Gastrocnemius medialis (tissue), 4 donors: ENCODE measurements at regions of chr1 and their contacts with region 1.

Region 1: GRCh38 chr1:20493839-20494608 is 8.0 kb upstream of the CAMK2N1 start:
- DNase-seq: peak; percentile 59 to 77
- ATAC-seq: peak; percentile 83 to 87
- H3K4me3 ChIP-seq: no peak overlapping the region
- H3K27ac ChIP-seq: no peak overlapping the region
- H3K4me1 ChIP-seq: peaks cover 3 to 5% of the 10 kb centered on the region in 2 donors
- H3K27me3 ChIP-seq: no peaks in the 10 kb centered on the region
- CTCF ChIP-seq: peak; percentile 93 to 97 (median 95)
- POLR2A ChIP-seq: no peak

Region 2: DNA sequence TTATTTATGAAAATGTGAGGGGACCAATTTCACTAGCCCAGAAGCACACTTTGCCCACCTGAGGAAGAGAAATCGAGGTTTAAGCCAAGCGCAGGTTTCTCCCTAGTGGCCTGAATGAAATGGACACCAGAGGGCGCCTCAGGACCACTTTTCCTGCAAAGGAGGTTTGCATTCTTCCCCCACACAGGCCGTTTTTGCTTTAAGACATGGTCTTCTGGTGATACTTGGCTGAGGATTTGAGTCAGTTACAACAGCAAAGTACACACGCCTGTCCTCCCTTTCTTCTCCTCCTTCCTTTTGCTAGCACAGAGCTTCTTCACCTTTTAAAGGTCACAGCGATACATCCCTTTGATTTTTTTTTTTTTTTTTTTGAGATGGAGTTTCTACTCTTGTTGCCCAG is 576.0 kb before region 1 on chr1:
- in situ Hi-C with region 1: loop called (anchors 10 kb)
- intact Hi-C with region 1: loop called (anchors 1 kb)
- DNase-seq: peak; percentile 38 to 62
- ATAC-seq: peak; percentile 66 to 77
- H3K4me3 ChIP-seq: no peak overlapping the region
- H3K27ac ChIP-seq: no peak overlapping the region
- H3K4me1 ChIP-seq: no peaks in the 10 kb centered on the region
- H3K27me3 ChIP-seq: no peaks in the 10 kb centered on the region
- CTCF ChIP-seq: peak; percentile 70 to 88 (median 81)
- POLR2A ChIP-seq: no peak

Region 3: GRCh38 chr1:20212685-20213331 is 281.2 kb before region 1 on chr1:
- in situ Hi-C with region 1: loop called (anchors 5 kb)
- intact Hi-C with region 1: loop called (anchors 1 kb)
- DNase-seq: peak; percentile 22 to 23
- ATAC-seq: peak; percentile 36 to 58
- H3K4me3 ChIP-seq: peak overlapping the region in 1 of 4 donors; percentile 39
- H3K27ac ChIP-seq: no peak overlapping the region
- H3K4me1 ChIP-seq: peaks cover 0 to 8% of the 10 kb centered on the region in 2 donors
- H3K27me3 ChIP-seq: no peaks in the 10 kb centered on the region
- CTCF ChIP-seq: peak; percentile 44 to 89 (median 62)
- POLR2A ChIP-seq: no peak

Region 4: DNA sequence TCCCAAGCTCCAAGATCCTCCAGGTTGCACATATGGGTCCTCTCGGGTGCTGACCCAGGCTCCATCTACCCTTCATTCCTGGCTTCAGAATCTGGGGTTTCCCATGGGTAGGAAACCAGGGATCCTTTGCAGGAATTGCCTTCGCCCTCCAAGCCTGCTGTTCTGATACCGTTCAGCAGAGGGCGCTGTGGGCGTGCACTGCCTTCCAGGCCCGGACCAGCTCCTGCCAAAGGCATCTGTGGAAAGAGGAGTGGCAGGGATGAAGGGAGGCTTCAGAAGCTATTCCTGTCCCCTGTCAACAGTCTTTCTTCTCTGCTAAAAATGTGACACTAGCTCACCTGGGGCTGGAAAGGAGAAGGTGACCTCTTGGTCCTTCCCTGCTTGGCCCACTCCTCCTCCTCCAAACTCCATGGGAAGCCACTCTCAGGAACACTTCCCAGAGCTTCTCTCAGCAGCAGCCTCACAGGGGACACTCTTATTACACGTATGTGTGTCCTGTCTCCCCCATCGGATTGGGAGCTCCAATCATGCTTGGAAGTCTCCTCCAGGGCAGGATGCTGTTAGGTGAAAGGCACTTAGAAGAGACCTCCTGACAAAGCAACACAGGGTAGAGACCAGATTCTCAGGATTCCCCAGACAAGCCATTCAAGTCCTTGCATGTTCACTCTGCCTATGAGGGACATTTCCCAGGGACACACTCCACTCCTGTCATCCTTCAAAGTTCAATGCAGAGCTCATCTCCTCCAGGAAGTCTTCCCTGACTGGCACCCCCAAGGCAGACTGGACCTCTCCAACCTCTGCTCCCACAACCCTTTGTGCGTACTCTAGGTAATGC is 132.0 kb before region 1 on chr1:
- in situ Hi-C with region 1: no loop called
- intact Hi-C with region 1: loop called (anchors 1 kb)
- DNase-seq: peak in 1 of 2 donors; percentile 48
- ATAC-seq: peak in 1 of 2 donors; percentile 44
- H3K4me3 ChIP-seq: no peak overlapping the region
- H3K27ac ChIP-seq: no peak overlapping the region
- H3K4me1 ChIP-seq: peaks cover 26 to 37% of the 10 kb centered on the region in 2 donors
- H3K27me3 ChIP-seq: peaks cover 16 to 25% (median 19%) of the 10 kb centered on the region in 3 donors
- CTCF ChIP-seq: peak; percentile 54 to 81 (median 79)
- POLR2A ChIP-seq: no peak

Region 5: DNA sequence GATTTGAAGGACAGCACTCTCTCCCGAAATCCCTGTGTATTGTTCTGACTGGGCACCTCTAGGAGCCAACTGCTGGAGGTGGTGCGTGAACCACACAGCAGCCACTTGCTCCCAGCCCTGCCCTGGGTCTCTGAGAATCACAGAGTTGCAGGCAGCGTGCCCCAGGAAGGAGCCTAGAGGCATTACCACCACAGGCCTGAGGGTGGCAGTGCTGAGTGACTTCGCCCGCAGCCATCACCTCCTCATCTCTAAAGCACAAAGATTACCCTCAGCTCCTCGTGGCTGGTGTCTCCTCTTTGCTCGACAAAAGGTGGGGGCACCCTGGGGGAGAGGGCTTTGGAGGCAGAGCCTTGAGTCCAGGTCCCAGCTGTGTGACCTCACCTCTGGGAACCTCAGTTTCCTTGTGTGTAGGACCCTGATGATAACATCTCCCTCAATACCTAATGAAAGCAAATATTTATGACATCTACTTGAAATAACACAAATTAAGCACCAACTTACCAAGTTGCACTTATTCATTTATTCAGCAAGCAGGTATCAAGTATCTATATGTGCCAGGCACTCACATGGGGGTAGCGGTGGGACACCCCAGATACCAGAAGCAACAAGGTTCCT is 117.0 kb before region 1 on chr1:
- in situ Hi-C with region 1: loop called in 3 of 4 experiments (anchors 5 to 10 kb)
- intact Hi-C with region 1: loop called (anchors 1 kb)
- DNase-seq: no peak
- ATAC-seq: no peak
- H3K4me3 ChIP-seq: no peak overlapping the region
- H3K27ac ChIP-seq: no peak overlapping the region
- H3K4me1 ChIP-seq: no peaks in the 10 kb centered on the region
- H3K27me3 ChIP-seq: peaks cover 0 to 5% (median 0%) of the 10 kb centered on the region in 3 donors
- CTCF ChIP-seq: peak; percentile 38 to 67 (median 60)
- POLR2A ChIP-seq: no peak